Activated CD4-positive, alpha-beta T cell treated with anti-CD3 and anti-CD28 coated beads for 36 hours (primary cell): ENCODE measurements at regions of chr1 and their contacts with region 1.

Region 1: GRCh38 chr1:160681067-160681890 is 30.3 kb downstream of the CD48 start:
- DNase-seq: peak; percentile 96
- ATAC-seq: peak; percentile 76
- H3K4me3 Mint-ChIP-seq: no peak overlapping the region
- H3K27ac Mint-ChIP-seq: peak overlapping the region; percentile 94
- H3K4me1 Mint-ChIP-seq: peaks cover 78% of the 10 kb centered on the region
- H3K27me3 Mint-ChIP-seq: no peaks in the 10 kb centered on the region

Region 2: GRCh38 chr1:160451119-160451858 is 230.0 kb before region 1 on chr1:
- CTCF ChIA-PET with region 1: no interaction called
- POLR2A ChIA-PET with region 1: no interaction called
- intact Hi-C with region 1: no loop called
- DNase-seq: no peak
- ATAC-seq: peak; percentile 33
- H3K4me3 Mint-ChIP-seq: peak overlapping the region; percentile 48
- H3K27ac Mint-ChIP-seq: peak overlapping the region; percentile 95
- H3K4me1 Mint-ChIP-seq: peaks cover 82% of the 10 kb centered on the region
- H3K27me3 Mint-ChIP-seq: no peaks in the 10 kb centered on the region

Region 3: GRCh38 chr1:160519642-160520435 is 161.4 kb before region 1 on chr1:
- CTCF ChIA-PET with region 1: no interaction called
- POLR2A ChIA-PET with region 1: no interaction called
- intact Hi-C with region 1: no loop called
- DNase-seq: peak; percentile 54
- ATAC-seq: peak; percentile 70
- H3K4me3 Mint-ChIP-seq: peak overlapping the region; percentile 97
- H3K27ac Mint-ChIP-seq: peak overlapping the region; percentile 98
- H3K4me1 Mint-ChIP-seq: peaks cover 83% of the 10 kb centered on the region
- H3K27me3 Mint-ChIP-seq: no peaks in the 10 kb centered on the region

Region 4: DNA sequence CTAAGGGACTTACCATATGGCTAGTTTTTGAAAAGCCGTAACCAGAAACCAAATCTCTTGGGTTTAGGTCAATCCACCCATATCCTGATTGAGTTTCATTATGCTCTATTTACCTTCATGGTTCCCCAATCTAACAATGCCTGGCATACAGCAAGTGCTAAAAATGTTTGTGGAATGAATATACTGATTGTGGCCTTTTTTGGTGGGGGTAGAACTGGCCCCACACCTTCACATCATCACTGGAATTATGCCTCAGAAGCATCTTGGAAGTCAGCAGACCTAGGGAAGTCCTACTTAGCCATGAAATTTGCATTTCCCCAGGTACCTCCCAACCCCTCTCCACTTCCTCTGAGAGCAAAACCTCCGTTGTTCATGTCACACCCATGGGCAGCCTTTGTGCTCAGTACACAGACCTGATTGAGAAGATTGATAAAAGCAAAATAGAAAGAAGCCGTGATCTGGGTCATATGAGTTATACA is 16.7 kb before region 1 on chr1:
- CTCF ChIA-PET with region 1: interaction called, 18 read pairs
- POLR2A ChIA-PET with region 1: no interaction called
- intact Hi-C with region 1: no loop called
- DNase-seq: peak; percentile 55
- ATAC-seq: peak; percentile 79
- H3K4me3 Mint-ChIP-seq: peak overlapping the region; percentile 40
- H3K27ac Mint-ChIP-seq: peak overlapping the region; percentile 89
- H3K4me1 Mint-ChIP-seq: peaks cover 70% of the 10 kb centered on the region
- H3K27me3 Mint-ChIP-seq: no peaks in the 10 kb centered on the region

Region 5: GRCh38 chr1:160711602-160712311 is 30.5 kb after region 1 on chr1 and contains the start of gene CD48:
- CTCF ChIA-PET with region 1: interaction called, 59 read pairs
- POLR2A ChIA-PET with region 1: interaction called, 8 read pairs
- intact Hi-C with region 1: loop called (anchors 1 kb)
- DNase-seq: peak; percentile 70
- ATAC-seq: peak; percentile 40
- H3K4me3 Mint-ChIP-seq: no peak within 1 kb of the TSS
- H3K27ac Mint-ChIP-seq: no peak within 1 kb of the TSS
- H3K4me1 Mint-ChIP-seq: peaks cover 34% of the 10 kb centered on the region
- H3K27me3 Mint-ChIP-seq: no peaks in the 10 kb centered on the region
- total RNA-seq, gene CD48: 180 to 217 TPM

Region 6: DNA sequence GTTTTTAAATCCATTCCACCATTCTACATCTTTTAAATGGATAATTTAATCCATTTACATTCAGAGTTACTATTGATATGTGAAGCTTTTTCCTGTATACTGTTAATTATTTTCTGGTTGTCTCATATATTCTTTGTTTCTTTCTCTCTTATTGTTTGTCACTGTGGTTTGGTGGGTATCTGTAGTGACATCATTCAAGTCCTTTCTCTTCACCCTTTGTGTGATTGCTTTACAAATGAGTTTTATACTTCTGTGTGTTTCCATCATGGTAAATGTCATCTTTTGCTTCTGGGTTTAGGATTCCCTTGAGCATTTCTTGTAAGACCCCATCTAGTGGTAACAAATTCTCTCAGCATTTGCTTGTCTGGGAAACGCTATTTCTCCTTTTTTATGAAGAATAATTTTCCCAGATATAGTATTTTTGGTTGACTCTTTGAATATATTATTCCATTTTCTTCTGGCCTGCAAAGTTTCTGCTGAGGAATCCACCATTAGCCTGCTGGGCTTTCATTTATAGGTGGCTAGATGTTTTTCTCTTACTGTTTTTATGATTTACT is 124.9 kb after region 1 on chr1:
- CTCF ChIA-PET with region 1: interaction called, 10 read pairs
- POLR2A ChIA-PET with region 1: no interaction called
- intact Hi-C with region 1: no loop called
- DNase-seq: no peak
- ATAC-seq: peak; percentile 76
- H3K4me3 Mint-ChIP-seq: no peak overlapping the region
- H3K27ac Mint-ChIP-seq: peak overlapping the region; percentile 74
- H3K4me1 Mint-ChIP-seq: peaks cover 79% of the 10 kb centered on the region
- H3K27me3 Mint-ChIP-seq: no peaks in the 10 kb centered on the region

Region 7: GRCh38 chr1:160884579-160884978 is 203.3 kb after region 1 on chr1:
- CTCF ChIA-PET with region 1: interaction called, 13 read pairs
- POLR2A ChIA-PET with region 1: no interaction called
- intact Hi-C with region 1: loop called in 1 of 2 experiments (anchors 1 kb)
- DNase-seq: peak; percentile 55
- ATAC-seq: peak; percentile 94
- H3K4me3 Mint-ChIP-seq: no peak overlapping the region
- H3K27ac Mint-ChIP-seq: no peak overlapping the region
- H3K4me1 Mint-ChIP-seq: peaks cover 10% of the 10 kb centered on the region
- H3K27me3 Mint-ChIP-seq: peaks cover 2% of the 10 kb centered on the region